Right ventricle myocardium inferior (tissue), 1 donor: ENCODE measurements at regions of chr3 and their contacts with region 1.

Region 1: DNA sequence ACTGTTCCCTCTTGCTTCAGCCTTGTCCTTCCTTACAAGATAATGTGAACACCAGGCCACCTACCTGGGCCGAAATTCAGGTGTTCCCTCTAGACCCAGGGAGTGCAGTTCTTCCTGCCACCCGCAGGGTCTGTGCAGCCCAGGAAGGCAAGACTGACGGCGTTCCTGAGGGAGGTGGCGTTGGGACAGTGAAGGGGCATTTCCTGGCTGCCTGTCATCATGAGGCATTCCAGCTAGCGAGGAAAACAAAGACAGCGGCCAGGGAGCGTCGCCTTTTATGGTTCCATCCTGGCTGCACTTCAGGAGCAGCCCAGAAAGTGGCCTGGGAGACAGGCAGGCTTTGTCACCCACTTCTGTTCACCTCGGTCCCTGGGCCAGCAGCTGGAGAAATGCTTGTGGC is 84.8 kb upstream of the WNT5A start:
- DNase-seq: peak; percentile 79
- ATAC-seq: peak; percentile 93

Region 2: GRCh38 chr3:55122279-55122678 is 449.6 kb before region 1 on chr3:
- intact Hi-C with region 1: no loop called
- DNase-seq: no peak
- ATAC-seq: no peak

Region 3: DNA sequence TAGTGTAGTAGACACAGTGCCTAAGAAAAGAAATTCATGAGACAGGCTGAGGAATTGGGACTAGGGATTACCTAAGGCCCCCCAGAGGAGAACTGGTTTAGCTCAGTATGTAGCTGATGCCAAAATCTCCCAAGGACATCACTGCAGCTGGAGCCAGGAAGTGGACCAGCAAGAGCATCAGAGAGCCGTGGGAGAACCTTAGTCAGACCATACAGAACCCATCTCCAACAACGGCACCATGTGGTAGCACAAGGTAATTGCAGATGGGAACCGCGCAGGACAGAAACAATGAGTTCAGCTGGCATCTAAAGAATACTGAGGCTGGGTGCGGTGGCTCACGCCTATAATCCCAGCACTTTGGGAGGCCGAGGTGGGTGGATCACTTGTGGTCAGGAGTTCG is 166.5 kb before region 1 on chr3:
- intact Hi-C with region 1: no loop called
- DNase-seq: no peak
- ATAC-seq: no peak

Region 4: GRCh38 chr3:55434789-55435188 is 137.1 kb before region 1 on chr3:
- intact Hi-C with region 1: no loop called
- DNase-seq: no peak
- ATAC-seq: no peak

Region 5: DNA sequence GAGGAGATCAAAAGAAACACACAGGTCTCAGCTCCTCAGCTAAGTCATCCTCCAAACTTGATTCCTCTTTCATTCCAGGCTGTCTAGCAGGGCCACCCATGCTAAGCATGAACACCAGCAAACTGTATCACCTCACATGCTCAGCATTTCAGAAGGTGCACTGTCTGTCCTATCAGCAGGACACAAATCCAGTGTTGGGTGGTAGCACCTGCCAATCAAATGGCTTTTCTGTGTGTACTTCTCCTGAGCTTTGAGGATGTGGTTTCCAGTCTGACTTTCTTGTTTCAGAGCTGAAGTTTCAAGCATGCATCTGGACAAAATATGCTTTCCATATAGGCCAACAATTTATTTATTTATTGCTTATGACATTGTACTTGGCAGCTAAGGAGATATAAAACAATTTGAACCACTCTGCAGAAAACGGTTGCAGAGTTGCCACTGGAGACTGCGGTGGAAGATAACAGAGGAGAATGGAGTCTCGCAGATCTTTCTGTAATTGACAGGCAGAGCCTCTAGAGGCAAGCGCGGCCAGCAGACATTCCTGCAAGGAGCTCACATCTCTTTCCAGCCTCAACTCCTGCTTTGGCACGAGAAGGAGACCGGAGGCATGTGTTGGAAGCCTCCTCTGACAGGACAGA is 82.3 kb after region 1 on chr3:
- intact Hi-C with region 1: loop called (anchors 10 kb)
- DNase-seq: no peak
- ATAC-seq: no peak

Region 6: DNA sequence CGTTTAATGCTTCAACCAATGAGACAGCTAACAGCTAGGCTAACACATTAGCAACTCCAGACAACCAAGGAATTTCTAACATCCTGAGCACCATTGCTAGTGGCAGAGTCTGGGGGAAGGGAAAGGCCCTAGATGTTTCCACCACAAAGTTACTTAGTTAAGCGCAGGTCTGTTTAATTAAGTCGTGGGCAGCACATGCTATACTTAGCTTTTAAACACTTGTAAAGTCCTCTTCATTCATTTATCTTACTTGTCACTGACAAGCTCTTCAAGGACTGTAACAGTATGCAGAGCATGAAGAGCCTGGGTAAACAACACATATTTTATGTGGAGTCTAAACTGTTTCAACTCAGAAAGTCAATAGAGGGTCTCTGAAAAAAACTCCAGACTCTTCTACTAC is 136.3 kb after region 1 on chr3:
- intact Hi-C with region 1: loop called (anchors 5 kb)
- DNase-seq: no peak
- ATAC-seq: peak; percentile 74